PC-9 (cell line): ENCODE measurements at regions of chr4 and their contacts with region 1.

Region 1: DNA sequence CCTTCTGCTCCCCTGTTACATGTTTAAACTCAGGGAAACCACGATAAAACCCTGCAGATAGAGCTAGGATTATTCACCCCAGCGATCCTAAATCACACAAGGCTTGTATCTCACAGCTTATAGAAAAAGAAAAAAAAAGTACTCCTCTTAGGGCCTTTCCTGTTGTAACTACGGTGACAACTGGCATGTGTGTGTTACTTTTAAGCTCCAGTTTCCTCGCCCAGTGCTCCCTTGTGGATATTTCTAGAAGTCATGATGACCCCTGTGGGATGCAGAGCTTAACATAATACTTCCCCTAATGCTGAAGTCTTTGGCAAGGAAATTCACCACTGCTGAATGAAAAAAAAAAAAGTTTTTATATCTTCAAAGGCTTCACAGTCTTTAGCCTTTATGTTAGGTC is 114.7 kb downstream of the NWD2 start:
- DNase-seq: no peak
- H3K4me3 ChIP-seq: no peak overlapping the region
- H3K27ac ChIP-seq: no peak overlapping the region
- H3K4me1 ChIP-seq: no peaks in the 10 kb centered on the region
- H3K27me3 ChIP-seq: no peaks in the 10 kb centered on the region
- CTCF ChIP-seq: no peak

Region 2: DNA sequence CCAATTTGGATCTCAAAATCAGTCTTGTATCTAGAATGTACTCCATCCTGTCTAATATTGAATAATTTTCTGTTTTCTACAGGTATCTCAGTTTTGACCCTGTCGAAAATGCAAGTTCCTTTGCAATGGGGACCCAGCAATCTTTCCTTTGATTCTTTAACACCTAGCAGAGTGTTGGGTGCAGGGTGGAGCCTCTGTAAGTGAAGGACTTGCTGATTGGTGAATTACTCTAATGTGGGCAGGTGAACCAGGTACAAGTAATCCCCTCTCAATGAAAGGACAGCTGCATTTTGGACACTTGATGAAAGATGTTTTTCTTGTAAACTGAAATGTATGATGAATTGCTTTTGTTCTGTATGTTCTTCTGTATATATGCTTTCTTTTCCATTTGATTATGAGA is 59.8 kb before region 1 on chr4:
- CTCF ChIA-PET with region 1: no interaction called
- POLR2A ChIA-PET with region 1: no interaction called
- intact Hi-C with region 1: no loop called
- DNase-seq: no peak
- H3K4me3 ChIP-seq: no peak overlapping the region
- H3K27ac ChIP-seq: no peak overlapping the region
- H3K4me1 ChIP-seq: no peaks in the 10 kb centered on the region
- H3K27me3 ChIP-seq: no peaks in the 10 kb centered on the region
- CTCF ChIP-seq: no peak

Region 3: GRCh38 chr4:37666625-37667071 is 307.4 kb after region 1 on chr4:
- CTCF ChIA-PET with region 1: interaction called, 10 read pairs
- POLR2A ChIA-PET with region 1: no interaction called
- intact Hi-C with region 1: no loop called
- DNase-seq: peak; percentile 55 to 95
- H3K4me3 ChIP-seq: no peak overlapping the region
- H3K27ac ChIP-seq: peak overlapping the region; percentile 39
- H3K4me1 ChIP-seq: peaks cover 20% of the 10 kb centered on the region
- H3K27me3 ChIP-seq: no peaks in the 10 kb centered on the region
- CTCF ChIP-seq: peak; percentile 22; the same call in 1 of the 2 replicates